AG04449 (cell line): ENCODE measurements at regions of chr13 and their contacts with region 1.

Region 1: DNA sequence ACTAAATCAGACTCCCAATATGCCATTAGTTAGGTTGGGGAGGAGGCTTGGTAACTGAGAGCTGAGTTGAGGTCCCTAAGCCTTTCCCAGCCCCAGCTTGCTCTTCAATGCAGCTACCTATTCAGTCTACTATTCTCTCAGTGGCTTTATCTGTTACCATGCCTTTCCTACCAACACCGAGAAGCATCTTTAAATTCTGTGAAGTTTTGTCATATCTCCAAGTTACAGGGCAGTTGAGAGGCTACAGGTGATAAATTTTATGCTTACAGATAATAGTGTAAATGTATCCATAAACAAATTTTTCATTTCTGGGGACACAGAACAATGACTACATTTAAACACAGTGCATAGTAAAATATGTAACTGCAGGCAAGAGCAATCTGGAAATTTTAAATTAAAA is 110.6 kb downstream of the ELF1 start:
- DNase-seq: no peak
- H3K4me3 ChIP-seq: no peak overlapping the region
- CTCF ChIP-seq: no peak

Region 2: GRCh38 chr13:40922437-40923040 is 14.0 kb after region 1 on chr13:
- CTCF ChIA-PET with region 1: interaction called, 12 read pairs
- POLR2A ChIA-PET with region 1: no interaction called
- DNase-seq: no peak
- H3K4me3 ChIP-seq: no peak overlapping the region
- CTCF ChIP-seq: no peak

Region 3: DNA sequence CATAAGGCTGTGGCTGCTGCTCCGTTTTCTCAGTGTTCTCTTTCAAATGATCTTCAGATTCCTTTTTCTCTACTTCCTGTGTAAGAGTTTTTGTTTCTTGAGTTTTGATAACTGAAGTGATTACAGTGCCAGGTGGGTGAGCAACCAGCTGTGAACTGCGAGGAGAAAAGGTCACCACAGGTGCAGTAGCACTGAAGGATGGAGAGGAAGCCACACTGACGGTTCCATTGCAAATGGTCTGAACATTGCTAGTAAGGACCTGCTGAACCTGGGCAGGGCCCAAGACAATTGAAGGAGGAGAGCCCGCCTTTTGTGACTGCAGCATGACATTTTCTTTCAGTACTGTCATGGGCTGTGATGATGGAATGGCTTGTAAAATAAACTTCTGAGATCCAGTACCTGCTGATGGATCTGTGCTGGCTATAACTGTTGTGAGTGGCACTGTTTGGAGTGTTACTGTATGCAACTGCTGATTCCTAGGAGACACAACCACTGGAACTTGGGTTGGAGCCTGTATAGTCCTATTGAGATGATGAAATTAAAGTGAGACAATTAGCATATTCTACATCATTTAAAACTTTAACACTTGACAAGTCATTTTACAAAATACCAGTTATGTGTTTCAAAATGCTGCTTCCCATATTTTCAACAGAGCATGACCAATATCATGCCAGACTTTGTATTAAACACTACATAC is 25.1 kb after region 1 on chr13:
- CTCF ChIA-PET with region 1: no interaction called
- POLR2A ChIA-PET with region 1: no interaction called
- DNase-seq: no peak
- H3K4me3 ChIP-seq: no peak overlapping the region
- CTCF ChIP-seq: no peak